ENCODE measurements at regions of chr9 and their contacts with region 1.

Region 1: DNA sequence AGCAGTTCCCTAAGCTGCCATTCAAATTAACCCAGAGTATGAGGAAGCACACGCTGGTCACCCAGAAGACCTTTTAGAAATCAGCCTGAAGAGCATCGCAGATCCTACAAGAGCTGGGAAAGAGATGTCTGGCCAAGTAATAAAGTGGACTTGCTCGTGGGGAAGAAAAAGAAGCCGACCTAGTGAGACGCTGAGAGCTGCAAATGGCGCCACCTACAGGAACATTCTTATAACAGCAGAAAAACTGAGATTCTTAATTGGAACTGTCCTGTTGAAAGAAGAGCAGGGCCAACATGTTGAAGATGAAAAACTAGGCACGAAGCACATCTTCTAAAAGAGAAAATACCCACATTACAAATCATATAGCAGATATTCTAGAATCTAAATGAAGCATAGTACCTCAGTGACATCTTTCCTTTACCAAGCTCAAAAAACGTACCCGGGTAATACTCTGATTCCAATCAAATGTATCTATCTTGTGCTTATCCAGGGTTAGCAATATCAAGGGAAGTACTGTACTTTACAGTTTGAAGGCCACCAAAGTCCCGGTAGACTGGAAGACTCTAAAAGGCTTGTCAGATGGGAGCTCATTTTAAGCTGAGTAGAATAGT is 3.9 kb upstream of the GNAQ start:
- DNase-seq: peak; percentile 22 to 89
- ATAC-seq: peak; percentile 30 to 50 (median 39)
- H3K4me3 ChIP-seq: no peak overlapping the region
- H3K4me3 Mint-ChIP-seq: no peak overlapping the region
- H3K27ac ChIP-seq: no peak overlapping the region
- H3K27ac Mint-ChIP-seq: no peak overlapping the region
- H3K4me1 ChIP-seq: peaks cover 12% of the 10 kb centered on the region
- H3K4me1 Mint-ChIP-seq: peaks cover 21 to 22% of the 10 kb centered on the region in 2 donors
- H3K27me3 ChIP-seq: no peaks in the 10 kb centered on the region
- H3K27me3 Mint-ChIP-seq: peaks cover 16 to 17% of the 10 kb centered on the region in 2 donors
- CTCF ChIP-seq: peak; percentile 77

Region 2: GRCh38 chr9:77177161-77177893 is 858.2 kb before region 1 on chr9 and contains the start of gene VPS13A:
- intact Hi-C with region 1: loop called (anchors 5 kb)
- DNase-seq: peak; percentile 78 to 96
- ATAC-seq: peak; percentile 89 to 96 (median 90)
- H3K4me3 ChIP-seq: peak within 1 kb of the TSS; percentile 91
- H3K4me3 Mint-ChIP-seq: peak within 1 kb of the TSS; percentile 96
- H3K27ac ChIP-seq: peak within 1 kb of the TSS; percentile 74
- H3K27ac Mint-ChIP-seq: peak within 1 kb of the TSS; percentile 87 to 91
- H3K4me1 ChIP-seq: peaks cover 15% of the 10 kb centered on the region
- H3K4me1 Mint-ChIP-seq: peaks cover 19 to 31% of the 10 kb centered on the region in 2 donors
- H3K27me3 ChIP-seq: no peaks in the 10 kb centered on the region
- H3K27me3 Mint-ChIP-seq: no peaks in the 10 kb centered on the region
- CTCF ChIP-seq: peak; percentile 24
- total RNA-seq, gene VPS13A: 54.7 to 74.2 (median 70.4) TPM

Region 3: DNA sequence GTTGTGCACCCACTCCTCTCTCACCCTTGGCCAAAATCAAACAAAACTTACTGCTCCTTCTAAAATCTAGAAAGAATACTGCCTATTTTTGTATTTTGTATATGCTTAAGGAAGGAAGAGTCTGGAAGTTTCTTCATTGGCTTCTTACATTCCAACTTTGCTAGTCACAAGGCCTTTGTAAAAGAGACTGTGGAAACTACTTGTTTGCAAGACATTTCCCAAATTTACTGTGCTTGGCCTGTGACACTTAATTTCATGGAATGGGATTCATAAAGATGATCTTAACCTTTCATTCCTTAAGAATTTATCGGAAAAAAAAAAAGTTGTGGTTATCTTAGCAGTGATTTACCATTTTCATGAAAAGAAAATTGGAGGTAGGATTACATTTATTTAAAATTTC is 649.3 kb before region 1 on chr9:
- intact Hi-C with region 1: no loop called
- DNase-seq: no peak
- ATAC-seq: no peak
- H3K4me3 ChIP-seq: no peak overlapping the region
- H3K4me3 Mint-ChIP-seq: no peak overlapping the region
- H3K27ac ChIP-seq: no peak overlapping the region
- H3K27ac Mint-ChIP-seq: no peak overlapping the region
- H3K4me1 ChIP-seq: no peaks in the 10 kb centered on the region
- H3K4me1 Mint-ChIP-seq: no peaks in the 10 kb centered on the region
- H3K27me3 ChIP-seq: no peaks in the 10 kb centered on the region
- H3K27me3 Mint-ChIP-seq: no peaks in the 10 kb centered on the region
- CTCF ChIP-seq: no peak

Region 4: DNA sequence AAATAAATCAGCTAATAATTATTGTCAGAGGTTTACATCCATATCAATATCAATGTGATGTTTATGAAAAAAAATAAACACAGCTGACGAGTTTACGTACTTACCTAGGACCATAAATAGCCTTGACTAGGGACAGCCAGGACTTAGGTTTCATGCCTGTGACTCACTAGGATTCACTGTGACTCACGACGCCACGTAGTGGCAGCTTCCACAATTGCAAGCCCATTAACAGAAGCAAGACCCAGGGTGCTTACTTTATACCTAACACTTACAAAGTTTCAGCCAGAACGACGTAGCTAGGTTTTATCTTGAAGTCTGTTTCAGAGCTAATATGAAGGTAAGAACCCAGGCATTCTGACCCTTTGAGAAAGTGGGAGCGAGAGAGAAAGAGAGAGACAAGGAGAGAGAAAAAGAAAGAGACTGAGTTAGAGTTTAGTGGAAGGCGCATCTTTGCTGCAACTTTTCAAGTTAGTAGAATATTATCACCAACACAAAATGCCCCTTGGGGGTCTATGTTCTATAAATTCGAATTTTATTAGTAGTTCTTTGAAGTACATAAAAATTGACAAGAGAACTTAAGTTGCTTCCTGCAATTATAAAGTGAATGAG is 578.6 kb before region 1 on chr9:
- intact Hi-C with region 1: loop called (anchors 2 kb)
- DNase-seq: peak; percentile 69 to 85
- ATAC-seq: peak; percentile 84 to 91 (median 87)
- H3K4me3 ChIP-seq: no peak overlapping the region
- H3K4me3 Mint-ChIP-seq: no peak overlapping the region
- H3K27ac ChIP-seq: no peak overlapping the region
- H3K27ac Mint-ChIP-seq: no peak overlapping the region
- H3K4me1 ChIP-seq: no peaks in the 10 kb centered on the region
- H3K4me1 Mint-ChIP-seq: peaks cover 15 to 19% of the 10 kb centered on the region in 2 donors
- H3K27me3 ChIP-seq: no peaks in the 10 kb centered on the region
- H3K27me3 Mint-ChIP-seq: peaks cover 9 to 39% of the 10 kb centered on the region in 2 donors
- CTCF ChIP-seq: peak; percentile 80

Region 5: DNA sequence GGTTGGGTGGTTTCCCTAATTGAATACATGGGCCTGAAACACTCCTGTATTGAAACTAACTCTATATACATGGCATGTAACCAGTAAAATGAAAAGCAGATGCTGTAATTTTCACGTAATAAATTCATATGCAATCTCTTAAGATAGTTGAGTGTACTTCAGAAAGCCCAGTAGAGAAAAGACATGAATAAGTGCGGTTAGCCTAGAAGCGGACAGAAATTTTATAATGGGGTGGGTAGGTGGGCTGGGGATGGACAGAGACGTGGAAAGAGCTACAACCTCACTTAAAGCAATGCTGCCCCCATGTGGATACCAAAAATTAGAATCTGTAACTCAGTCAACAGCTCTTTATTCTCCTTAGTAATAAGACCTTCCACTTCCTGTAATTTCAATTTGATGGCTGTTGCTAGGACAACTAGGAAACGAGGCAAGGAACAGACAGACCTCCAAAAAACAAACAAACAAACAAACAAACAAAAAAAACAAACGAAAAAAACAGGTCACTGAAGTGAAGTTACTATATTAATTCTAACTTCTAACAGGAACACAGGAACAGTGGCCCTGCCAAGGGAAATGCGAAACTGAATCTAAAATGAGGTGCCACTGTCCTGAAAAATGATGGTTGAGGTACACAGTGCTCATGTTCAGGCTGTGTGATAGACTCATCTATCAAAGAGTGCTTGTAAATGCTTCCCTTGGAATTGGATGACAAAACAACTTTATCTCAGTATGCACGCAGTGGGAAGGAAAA is 284.0 kb before region 1 on chr9:
- intact Hi-C with region 1: loop called (anchors 10 kb)
- DNase-seq: peak in 1 of 2 donors; percentile 46
- ATAC-seq: peak in 2 of 3 donors; percentile 42 to 48
- H3K4me3 ChIP-seq: no peak overlapping the region
- H3K4me3 Mint-ChIP-seq: no peak overlapping the region
- H3K27ac ChIP-seq: no peak overlapping the region
- H3K27ac Mint-ChIP-seq: no peak overlapping the region
- H3K4me1 ChIP-seq: no peaks in the 10 kb centered on the region
- H3K4me1 Mint-ChIP-seq: peaks cover 8% of the 10 kb centered on the region in 2 donors
- H3K27me3 ChIP-seq: no peaks in the 10 kb centered on the region
- H3K27me3 Mint-ChIP-seq: no peaks in the 10 kb centered on the region
- CTCF ChIP-seq: no peak

Region 6: DNA sequence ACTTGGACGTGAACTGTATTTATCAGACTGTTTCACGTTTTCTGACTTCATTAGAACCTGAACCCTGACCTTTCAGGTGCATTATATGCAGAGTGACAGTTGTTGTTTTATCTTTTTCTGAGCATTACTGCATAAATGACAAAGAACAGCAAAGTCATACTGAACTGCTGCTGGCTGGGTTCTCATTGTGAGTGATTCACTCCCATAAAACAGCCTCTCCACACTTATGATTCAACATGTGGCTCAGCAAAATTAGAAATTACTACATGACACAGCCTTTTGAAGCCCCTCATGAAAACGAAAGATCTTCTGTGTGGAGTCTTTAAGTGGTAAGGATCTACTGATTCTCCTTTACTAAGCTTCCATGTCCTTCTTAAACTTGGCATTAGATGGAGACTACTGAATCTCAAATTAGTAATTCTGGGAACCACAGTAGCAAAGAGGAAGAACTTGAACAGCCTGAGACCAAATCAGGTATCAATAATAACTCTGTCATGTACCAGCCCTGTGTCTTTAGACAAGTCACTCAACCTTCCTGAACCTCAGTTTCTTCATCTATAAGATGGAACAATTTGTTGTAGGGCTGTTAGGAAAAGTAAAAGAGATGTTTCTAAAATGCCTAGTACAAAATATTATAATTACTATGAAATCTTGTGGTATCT is 215.1 kb before region 1 on chr9:
- intact Hi-C with region 1: loop called (anchors 10 kb)
- DNase-seq: no peak
- ATAC-seq: no peak
- H3K4me3 ChIP-seq: no peak overlapping the region
- H3K4me3 Mint-ChIP-seq: no peak overlapping the region
- H3K27ac ChIP-seq: no peak overlapping the region
- H3K27ac Mint-ChIP-seq: no peak overlapping the region
- H3K4me1 ChIP-seq: no peaks in the 10 kb centered on the region
- H3K4me1 Mint-ChIP-seq: no peaks in the 10 kb centered on the region
- H3K27me3 ChIP-seq: no peaks in the 10 kb centered on the region
- H3K27me3 Mint-ChIP-seq: peaks cover 0 to 5% of the 10 kb centered on the region in 2 donors
- CTCF ChIP-seq: no peak

Region 7: DNA sequence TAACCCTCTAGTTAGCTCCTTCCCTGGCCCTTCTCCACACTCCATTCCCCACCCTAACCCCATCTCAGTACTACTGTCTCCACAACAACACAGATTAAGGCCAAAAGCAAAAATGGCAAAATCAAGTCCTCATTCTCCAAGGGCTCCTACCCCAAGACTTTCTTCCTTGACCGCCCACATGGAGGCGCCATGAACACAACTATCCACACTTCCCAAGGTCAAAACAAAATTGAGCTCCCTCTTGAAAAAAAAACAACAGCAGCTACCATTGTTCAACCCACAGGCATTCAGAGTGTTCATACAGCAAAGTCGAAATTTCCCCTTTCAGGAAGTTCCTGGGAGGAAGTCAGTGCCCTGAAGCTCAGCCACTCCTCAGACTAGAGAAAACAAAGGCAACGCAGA is 58.3 kb before region 1 on chr9:
- intact Hi-C with region 1: loop called (anchors 1 kb)
- DNase-seq: peak; percentile 24 to 73
- ATAC-seq: peak; percentile 34 to 67 (median 59)
- H3K4me3 ChIP-seq: no peak overlapping the region
- H3K4me3 Mint-ChIP-seq: no peak overlapping the region
- H3K27ac ChIP-seq: no peak overlapping the region
- H3K27ac Mint-ChIP-seq: peak overlapping the region; percentile 65 to 70
- H3K4me1 ChIP-seq: peaks cover 20% of the 10 kb centered on the region
- H3K4me1 Mint-ChIP-seq: peaks cover 35 to 37% of the 10 kb centered on the region in 2 donors
- H3K27me3 ChIP-seq: no peaks in the 10 kb centered on the region
- H3K27me3 Mint-ChIP-seq: no peaks in the 10 kb centered on the region
- CTCF ChIP-seq: peak; percentile 22

Region 8: GRCh38 chr9:78213712-78214111 is 178.2 kb after region 1 on chr9:
- intact Hi-C with region 1: loop called (anchors 10 kb)
- DNase-seq: peak in 1 of 2 donors; percentile 67
- ATAC-seq: peak; percentile 46 to 68 (median 66)
- H3K4me3 ChIP-seq: no peak overlapping the region
- H3K4me3 Mint-ChIP-seq: no peak overlapping the region
- H3K27ac ChIP-seq: no peak overlapping the region
- H3K27ac Mint-ChIP-seq: peak overlapping the region in 1 of 2 donors; percentile 49
- H3K4me1 ChIP-seq: peaks cover 26% of the 10 kb centered on the region
- H3K4me1 Mint-ChIP-seq: peaks cover 42 to 45% of the 10 kb centered on the region in 2 donors
- H3K27me3 ChIP-seq: no peaks in the 10 kb centered on the region
- H3K27me3 Mint-ChIP-seq: peaks cover 0 to 1% of the 10 kb centered on the region in 2 donors
- CTCF ChIP-seq: peak; percentile 47